ENCODE measurements at regions of chr17 and their contacts with region 1.

Region 1: GRCh38 chr17:27654654-27655524 is 23.9 kb downstream of the LGALS9 start:
- DNase-seq: peak; percentile 50 to 95 (median 78)

Region 2: DNA sequence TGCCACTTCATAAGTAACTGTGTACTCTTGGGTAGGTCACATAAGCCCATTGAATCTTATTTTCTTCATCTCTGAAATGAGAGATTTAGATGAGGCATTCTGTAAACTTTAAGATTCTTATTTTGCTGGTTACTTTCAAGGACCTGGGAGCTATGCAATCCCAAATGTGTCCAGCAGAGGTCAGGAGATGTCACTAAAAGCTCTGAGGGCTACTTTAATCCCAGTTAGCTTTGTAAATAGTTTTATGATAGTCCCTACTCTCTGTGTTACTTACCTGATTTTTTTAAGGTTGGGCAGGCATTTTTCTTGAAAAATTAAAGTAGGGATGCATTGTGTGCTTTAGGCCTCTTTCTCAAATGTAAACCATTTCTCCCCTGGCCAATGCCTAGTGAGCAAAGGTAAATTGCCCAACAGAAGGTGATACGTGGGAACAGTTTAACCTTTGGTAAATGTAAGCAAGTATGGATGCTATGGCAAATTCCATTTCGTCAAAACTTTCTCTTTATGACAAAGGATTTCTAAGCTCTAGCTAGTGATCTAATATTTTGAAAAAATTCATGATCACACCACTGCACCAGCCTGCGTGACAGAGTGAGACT is 418.1 kb before region 1 on chr17:
- intact Hi-C with region 1: loop called (anchors 5 kb)
- DNase-seq: peak in 6 of 10 donors; percentile 50 to 89 (median 78)

Region 3: DNA sequence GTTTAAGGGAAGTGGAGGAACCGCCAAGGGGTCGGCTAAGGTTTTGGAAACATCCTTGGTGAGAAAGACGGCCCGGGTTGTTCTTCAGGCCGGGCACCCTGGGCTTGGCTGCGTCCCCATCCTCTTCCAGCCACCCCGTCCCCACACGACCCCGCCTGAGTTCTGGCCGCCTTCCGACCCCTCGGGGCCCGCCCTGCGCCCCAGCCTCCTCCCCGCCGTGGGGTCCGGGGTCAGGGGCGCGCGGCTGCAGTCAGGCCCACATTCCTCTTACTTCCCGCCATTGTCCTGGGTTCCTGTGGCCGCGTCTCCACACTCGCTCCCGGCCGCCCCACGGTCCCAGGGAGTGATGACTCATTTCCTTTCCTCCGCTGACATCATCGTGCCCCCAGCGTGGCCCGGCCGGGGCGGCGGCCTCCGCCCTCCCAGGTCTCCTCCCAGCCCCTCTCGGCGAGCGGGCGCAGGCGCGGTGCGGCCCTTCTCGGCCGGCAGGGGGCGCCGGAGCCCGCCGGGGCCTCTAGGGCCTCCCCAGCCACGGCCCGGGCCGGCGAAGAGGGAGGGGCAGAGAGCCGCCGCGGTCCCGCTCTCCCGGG is 301.3 kb before region 1 on chr17:
- intact Hi-C with region 1: loop called (anchors 5 kb)
- DNase-seq: peak; percentile 50 to 96 (median 75)

Region 4: GRCh38 chr17:27578718-27579085 is 76.2 kb before region 1 on chr17:
- intact Hi-C with region 1: no loop called
- DNase-seq: no peak

Region 5: DNA sequence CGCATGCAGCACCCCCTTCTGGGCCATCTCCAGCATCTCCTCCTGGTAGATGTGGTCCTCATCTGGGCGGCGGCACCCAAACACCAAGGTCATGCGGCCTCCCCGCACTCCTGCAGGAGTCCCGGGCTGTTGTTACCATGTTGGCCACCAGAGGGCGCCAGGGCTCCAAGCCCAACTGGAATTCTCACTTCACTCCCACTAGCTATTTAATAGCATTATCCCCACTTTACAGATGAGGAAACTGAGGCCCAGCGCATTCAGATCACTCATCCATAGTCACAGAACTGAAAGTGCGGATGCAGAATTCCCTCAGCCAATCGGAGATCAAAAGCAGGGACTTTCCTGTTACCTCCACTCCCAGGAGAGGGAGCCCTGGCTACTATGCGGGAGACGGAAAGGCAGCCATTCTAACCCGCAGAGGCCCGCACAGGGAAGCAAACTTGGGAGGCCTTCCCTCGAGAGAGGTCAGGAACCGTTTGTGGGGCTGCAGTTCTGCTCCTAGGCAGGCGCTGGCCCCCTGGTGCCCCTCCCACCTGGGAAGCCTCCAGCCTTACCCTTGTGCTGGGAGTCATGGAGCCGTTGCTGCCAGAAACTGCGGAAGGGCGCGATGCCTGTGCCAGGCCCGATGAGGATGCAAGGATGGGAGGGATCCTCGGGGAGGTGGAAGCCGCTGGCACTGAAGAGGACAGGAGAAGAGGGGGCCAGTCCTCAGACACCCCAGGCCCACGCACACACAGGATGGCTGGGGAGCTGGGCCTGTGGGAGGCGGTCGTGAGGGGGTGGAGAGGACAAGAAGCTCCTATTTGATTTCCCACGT is 105.4 kb after region 1 on chr17:
- intact Hi-C with region 1: loop called (anchors 2 kb)
- DNase-seq: peak; percentile 47 to 93 (median 74)

Region 6: DNA sequence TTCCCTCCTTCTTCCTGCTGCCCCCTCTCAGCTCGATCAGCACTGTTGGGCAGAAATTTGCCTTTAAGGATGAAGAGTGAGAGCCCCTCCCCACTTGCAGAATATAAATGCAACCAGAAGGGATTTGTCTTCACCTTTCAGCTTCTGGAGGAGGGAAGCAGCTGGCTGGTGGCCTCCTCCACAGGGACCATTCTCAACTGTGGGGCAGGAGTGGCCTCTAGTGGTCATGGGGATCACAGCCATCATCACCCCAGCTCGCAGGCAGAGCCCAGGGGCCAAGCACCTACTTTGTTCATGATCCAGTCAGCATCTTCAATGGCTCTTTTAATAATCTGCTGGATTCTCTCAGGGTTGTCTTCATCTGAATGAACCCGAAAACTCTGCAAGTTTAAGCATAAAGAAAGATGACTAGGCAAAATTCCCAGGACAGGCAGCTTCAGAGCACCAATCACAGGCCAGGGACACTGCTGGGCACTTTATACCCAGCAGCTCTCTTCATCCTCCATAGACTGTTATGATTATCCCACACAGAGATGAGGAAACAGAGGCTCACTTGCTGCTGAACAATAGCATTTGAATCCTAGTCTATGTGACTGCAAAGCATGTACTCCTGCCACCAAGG is 225.2 kb after region 1 on chr17:
- intact Hi-C with region 1: loop called (anchors 5 kb)
- DNase-seq: peak; percentile 65 to 96 (median 83)

Measured in posterior cingulate gyrus (tissue), 11 donors.